Activated CD8-positive, alpha-beta T cell treated with anti-CD3 and anti-CD28 coated beads for 36 hours (primary cell): ENCODE measurements at regions of chr1 and their contacts with region 1.

Region 1: DNA sequence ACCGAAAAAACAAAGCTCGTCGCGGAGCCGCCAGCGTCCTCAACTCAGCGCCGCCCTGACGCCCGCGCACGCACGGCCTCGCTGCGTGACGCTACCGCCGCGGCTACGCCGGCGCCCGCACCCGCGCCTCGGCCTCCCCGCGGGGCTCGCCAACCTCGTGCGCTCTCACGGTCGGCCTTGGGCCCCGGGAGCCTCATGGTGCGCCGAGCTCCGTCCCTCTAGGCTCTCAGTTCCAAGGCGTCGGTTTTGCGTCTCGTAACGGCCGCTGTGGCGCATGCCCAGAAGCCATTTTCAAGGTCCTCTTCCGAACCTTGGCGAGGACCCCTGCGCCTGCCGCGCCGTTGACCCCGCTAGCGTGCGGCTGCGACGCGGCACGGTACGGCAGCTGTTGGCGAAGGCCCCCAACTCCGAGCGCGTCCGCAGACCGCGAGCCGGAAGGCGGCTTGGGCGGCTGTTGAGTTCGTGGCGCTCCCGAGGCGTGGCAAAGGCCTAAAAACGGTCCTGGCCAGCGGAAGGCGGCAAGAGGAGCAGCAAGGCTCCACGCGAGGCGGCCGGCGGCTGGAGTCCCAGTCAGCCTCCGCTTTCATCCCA is at the start of gene HENMT1:
- DNase-seq: peak; percentile 83
- ATAC-seq: peak; percentile 80
- H3K4me3 Mint-ChIP-seq: peak within 1 kb of the TSS; percentile 82
- H3K27ac Mint-ChIP-seq: peak within 1 kb of the TSS; percentile 96
- H3K4me1 Mint-ChIP-seq: peaks cover 40% of the 10 kb centered on the region
- H3K27me3 Mint-ChIP-seq: no peaks in the 10 kb centered on the region
- CTCF ChIP-seq: no peak
- total RNA-seq, gene HENMT1: 25.3 to 27.1 TPM

Region 2: DNA sequence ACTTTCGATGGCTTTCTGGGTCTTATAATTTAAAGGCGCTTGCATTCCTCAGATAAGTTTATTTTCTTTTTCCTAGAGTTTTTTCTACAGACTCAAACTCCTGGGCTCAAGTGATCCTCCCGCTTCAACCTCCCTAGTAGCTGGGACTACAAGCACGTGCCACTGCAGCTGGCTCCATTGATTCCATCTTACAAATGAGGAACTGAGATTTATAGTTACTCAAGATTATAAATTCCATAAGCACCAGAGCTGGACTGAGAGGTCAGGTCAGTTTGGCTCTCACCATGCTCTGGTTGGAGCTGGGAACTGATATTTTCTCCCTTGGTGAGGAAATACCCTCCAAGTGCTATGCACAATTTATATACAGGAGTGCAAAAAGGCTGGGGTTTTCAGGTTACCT is 17.6 kb after region 1 on chr1:
- CTCF ChIA-PET with region 1: interaction called, 7 read pairs
- POLR2A ChIA-PET with region 1: interaction called, 10 read pairs
- intact Hi-C with region 1: no loop called
- DNase-seq: no peak
- ATAC-seq: no peak
- H3K4me3 Mint-ChIP-seq: no peak overlapping the region
- H3K27ac Mint-ChIP-seq: no peak overlapping the region
- H3K4me1 Mint-ChIP-seq: peaks cover 11% of the 10 kb centered on the region
- H3K27me3 Mint-ChIP-seq: no peaks in the 10 kb centered on the region
- CTCF ChIP-seq: no peak